ENCODE measurements at regions of chr6 and their contacts with region 1.

Region 1: GRCh38 chr6:17156112-17156921 is 54.5 kb downstream of the STMND1 start:
- DNase-seq: peak; percentile 85
- H3K4me3 ChIP-seq: no peak overlapping the region
- H3K27ac ChIP-seq: no peak overlapping the region
- H3K4me1 ChIP-seq: no peaks in the 10 kb centered on the region
- H3K27me3 ChIP-seq: no peaks in the 10 kb centered on the region
- CTCF ChIP-seq: peak; percentile 84

Region 2: GRCh38 chr6:17167327-17167979 is 11.1 kb after region 1 on chr6:
- CTCF ChIA-PET with region 1: no interaction called
- POLR2A ChIA-PET with region 1: interaction called, 12 read pairs
- intact Hi-C with region 1: no loop called
- DNase-seq: peak; percentile 74
- H3K4me3 ChIP-seq: no peak overlapping the region
- H3K27ac ChIP-seq: no peak overlapping the region
- H3K4me1 ChIP-seq: no peaks in the 10 kb centered on the region
- H3K27me3 ChIP-seq: no peaks in the 10 kb centered on the region
- CTCF ChIP-seq: peak; percentile 57

Region 3: GRCh38 chr6:17454316-17455005 is 298.1 kb after region 1 on chr6:
- CTCF ChIA-PET with region 1: no interaction called
- POLR2A ChIA-PET with region 1: no interaction called
- intact Hi-C with region 1: no loop called
- DNase-seq: no peak
- H3K4me3 ChIP-seq: no peak overlapping the region
- H3K27ac ChIP-seq: no peak overlapping the region
- H3K4me1 ChIP-seq: peaks cover 37% of the 10 kb centered on the region
- H3K27me3 ChIP-seq: no peaks in the 10 kb centered on the region
- CTCF ChIP-seq: no peak

Measured in A673 (cell line).